ENCODE measurements at regions of chr13 and their contacts with region 1.

Region 1: GRCh38 chr13:32639502-32640105 is 53.4 kb downstream of the PDS5B start:
- DNase-seq: peak; percentile 54
- ATAC-seq: peak; percentile 79 to 86

Region 2: DNA sequence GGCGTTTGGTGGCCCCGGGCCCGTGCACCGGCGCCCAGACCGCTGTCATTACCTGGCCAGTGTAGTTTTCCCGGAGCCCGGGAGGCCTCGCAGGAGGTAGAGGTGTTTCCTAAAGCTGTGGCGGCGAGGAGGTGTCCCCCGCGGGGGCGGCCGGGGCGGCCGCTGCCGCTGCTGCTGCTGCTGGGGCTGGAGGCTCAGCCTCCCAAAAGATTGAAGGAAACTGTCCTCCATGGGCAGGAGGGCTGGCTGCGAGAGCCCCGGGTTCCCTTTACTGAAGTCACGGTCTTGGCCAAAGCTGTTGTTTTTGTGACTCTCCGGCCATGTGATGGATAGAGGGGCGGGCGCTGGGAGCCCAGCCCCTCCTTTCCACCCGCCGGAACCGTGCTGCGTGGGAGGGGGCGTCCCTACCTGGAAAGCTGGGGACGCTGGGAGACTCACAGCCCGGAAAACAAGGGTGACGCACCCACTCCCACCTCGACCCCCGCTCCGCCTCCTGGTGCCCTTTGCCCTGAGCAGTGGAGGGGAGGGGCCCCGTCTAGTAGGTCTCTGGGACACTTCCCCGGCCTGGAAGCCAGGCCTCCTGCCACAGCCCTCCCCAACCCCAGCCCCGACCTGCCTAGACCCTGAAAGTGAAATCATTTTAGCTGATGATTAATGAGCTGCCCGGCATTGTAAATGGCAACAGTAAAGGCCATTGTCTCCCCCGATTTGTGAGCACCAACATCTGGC is 211.6 kb before region 1 on chr13 and contains the start of gene N4BP2L1:
- intact Hi-C with region 1: no loop called
- DNase-seq: peak; percentile 67
- ATAC-seq: peak; percentile 82 to 84
- total RNA-seq, gene N4BP2L1: 4.7 to 6.7 TPM

Region 3: GRCh38 chr13:32586080-32586900 is 53.3 kb before region 1 on chr13 and contains the start of gene PDS5B:
- intact Hi-C with region 1: loop called (anchors 1 to 5 kb)
- DNase-seq: peak; percentile 94
- ATAC-seq: peak; percentile 97
- total RNA-seq, gene PDS5B: 19.5 to 27.2 TPM